CD14-positive monocyte (primary cell): ENCODE measurements at regions of chr16 and their contacts with region 1.

Region 1: DNA sequence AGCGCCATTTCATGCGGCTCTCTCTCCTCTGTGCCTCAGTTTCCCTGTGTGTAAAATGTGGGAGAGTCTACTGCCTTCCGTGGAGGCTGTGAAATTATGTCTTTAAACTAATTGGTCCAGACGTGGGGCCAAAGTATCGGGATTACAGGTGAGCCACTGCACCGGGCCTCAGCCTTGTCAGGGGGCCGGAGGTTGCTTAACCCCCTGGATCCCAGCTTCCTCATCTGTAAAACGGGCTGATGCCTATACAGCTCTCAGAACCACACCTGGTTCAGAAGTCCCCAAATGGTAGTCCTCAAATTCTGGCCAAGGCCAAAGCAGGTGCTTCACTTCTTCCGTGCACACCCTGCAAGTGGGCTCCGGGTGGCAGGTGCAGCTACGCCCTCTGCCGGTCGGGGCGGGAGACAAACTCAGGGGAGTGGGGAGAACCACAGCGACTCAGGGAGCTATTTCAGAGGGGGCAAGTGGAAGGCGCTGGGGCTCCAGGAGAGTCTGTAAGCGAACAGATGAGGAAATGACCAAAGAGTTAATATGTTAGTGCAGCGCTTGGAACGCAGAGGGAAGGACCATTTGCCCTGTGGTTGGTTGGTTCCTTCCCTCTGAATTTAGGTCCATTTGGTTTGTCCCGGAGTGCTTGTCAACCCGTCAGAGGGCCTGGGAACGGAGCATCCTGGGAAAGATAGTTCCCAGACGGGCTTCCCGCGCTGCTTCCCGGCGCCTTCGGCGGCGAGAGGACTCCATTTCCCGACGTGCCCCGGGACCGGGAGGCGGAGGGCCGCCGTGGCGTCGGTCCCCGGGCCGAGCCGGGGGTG is at the start of gene MGRN1:
- DNase-seq: peak; percentile 92 to 96 (median 96)
- H3K4me3 ChIP-seq: peak within 1 kb of the TSS; percentile 61 to 96 (median 87)
- H3K4me3 Mint-ChIP-seq: peak within 1 kb of the TSS; percentile 100
- H3K27ac ChIP-seq: peak within 1 kb of the TSS; percentile 94 to 98
- H3K27ac Mint-ChIP-seq: peak within 1 kb of the TSS; percentile 99 to 100 (median 100)
- H3K4me1 ChIP-seq: peaks cover 38 to 51% of the 10 kb centered on the region in 2 donors
- H3K4me1 Mint-ChIP-seq: peaks cover 50% of the 10 kb centered on the region
- H3K27me3 ChIP-seq: no peaks in the 10 kb centered on the region
- H3K27me3 Mint-ChIP-seq: no peaks in the 10 kb centered on the region
- CTCF ChIP-seq: peak; percentile 95
- polyA plus RNA-seq, gene MGRN1: 3.7 to 48.2 (median 4.7) TPM

Region 2: DNA sequence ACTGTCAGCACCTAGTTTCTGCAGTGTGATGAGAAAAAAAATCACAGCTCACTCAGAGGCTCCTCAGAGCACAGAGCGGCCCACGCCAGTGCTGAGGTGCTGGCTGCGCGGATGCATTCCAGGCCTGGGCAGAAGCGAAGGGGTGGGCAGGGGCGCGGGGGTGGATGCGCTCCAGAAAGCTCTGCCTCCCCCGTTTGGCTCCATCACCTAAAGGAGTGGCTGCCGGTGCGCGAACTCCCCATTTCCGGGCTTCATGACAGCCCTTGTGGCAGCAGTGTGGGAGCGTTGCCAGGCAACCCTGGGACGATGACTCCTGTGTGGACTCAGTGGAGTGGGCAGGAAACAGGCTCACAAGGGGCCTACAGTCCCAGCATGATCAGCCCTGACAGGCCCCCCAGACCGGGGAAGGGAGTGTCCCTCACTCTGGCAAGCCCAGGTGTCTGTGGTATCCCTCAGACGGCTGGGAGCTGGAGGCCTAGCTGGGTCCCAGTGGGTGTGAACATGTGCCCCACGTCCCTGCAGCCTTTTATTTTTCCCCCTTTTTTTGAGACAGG is 36.3 kb after region 1 on chr16:
- intact Hi-C with region 1: loop called (anchors 5 kb)
- DNase-seq: no peak
- H3K4me3 ChIP-seq: no peak overlapping the region
- H3K4me3 Mint-ChIP-seq: no peak overlapping the region
- H3K27ac ChIP-seq: no peak overlapping the region
- H3K27ac Mint-ChIP-seq: no peak overlapping the region
- H3K4me1 ChIP-seq: peaks cover 36 to 47% of the 10 kb centered on the region in 2 donors
- H3K4me1 Mint-ChIP-seq: peaks cover 49% of the 10 kb centered on the region
- H3K27me3 ChIP-seq: no peaks in the 10 kb centered on the region
- H3K27me3 Mint-ChIP-seq: peaks cover 0 to 2% (median 0%) of the 10 kb centered on the region in 3 donors
- CTCF ChIP-seq: no peak

Region 3: DNA sequence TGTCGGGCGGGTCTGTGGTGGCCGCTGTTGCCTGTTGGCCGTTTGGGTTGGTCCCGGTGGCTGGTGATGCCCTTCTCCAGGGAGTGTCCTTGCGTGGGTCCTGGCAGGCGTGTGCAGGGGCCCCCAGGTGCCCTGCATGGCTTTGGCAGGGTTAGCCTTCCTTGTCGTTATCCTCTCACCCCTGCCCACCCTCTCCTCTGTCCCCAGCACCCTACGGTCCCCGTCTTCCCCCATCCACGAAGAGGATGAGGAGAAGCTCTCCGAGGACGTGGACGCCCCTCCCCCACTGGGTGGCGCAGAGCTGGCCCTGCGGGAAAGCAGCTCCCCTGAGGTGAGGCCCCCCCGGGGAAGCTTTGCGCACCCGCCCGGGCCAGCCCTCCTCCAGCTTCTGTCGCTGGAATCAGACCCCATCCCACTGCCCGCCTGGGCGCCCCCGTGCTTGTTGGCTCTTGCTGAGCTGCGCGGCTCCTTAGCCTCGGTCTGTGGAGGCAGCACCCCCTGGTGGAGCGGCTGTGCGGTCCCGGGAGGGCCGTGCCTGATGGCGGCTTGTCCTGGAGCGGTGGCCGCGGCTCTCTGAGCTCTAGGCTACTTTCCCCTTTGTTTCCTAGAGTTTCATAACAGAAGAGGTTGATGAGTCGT is 58.5 kb after region 1 on chr16:
- intact Hi-C with region 1: loop called in 1 of 2 experiments (anchors 5 kb)
- DNase-seq: peak; percentile 53 to 66 (median 66)
- H3K4me3 ChIP-seq: peak overlapping the region in 2 of 3 experiments; percentile 26 to 54
- H3K4me3 Mint-ChIP-seq: peak overlapping the region; percentile 54 to 70
- H3K27ac ChIP-seq: peak overlapping the region; percentile 60 to 94
- H3K27ac Mint-ChIP-seq: peak overlapping the region; percentile 82 to 96 (median 90)
- H3K4me1 ChIP-seq: peaks cover 46 to 48% of the 10 kb centered on the region in 2 donors
- H3K4me1 Mint-ChIP-seq: peaks cover 42% of the 10 kb centered on the region
- H3K27me3 ChIP-seq: no peaks in the 10 kb centered on the region
- H3K27me3 Mint-ChIP-seq: no peaks in the 10 kb centered on the region
- CTCF ChIP-seq: peak; percentile 77

Region 4: DNA sequence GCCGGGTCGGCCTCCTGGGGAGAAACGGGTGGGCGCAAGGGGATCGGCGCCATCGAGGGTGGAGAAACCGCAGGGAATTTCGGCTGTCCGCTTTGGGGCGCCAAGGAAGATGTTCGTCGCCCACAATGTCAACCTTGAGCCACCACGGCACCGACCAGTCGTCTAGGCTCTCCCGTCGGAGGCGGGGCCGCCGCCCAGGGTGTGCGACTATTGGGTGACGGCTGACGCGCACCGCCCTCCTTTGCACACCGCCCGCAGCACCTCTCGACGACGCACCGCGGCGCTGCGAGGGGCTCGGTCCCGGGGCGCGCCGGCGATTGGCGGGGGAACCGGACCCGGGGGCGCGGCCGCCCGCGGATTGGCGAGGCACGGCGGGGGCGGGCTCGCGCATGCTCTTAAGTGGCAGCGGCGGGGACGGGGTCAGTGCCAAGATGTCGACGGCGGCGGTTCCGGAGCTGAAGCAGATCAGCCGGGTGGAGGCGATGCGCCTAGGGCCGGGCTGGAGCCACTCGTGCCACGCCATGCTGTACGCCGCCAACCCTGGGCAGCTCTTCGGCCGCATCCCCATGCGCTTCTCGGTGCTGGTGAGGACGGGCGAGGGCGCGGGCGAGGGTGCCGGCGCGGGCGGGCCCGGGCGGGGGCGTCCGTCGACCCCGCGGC is 69.2 kb after region 1 on chr16 and contains the start of gene NUDT16L1:
- intact Hi-C with region 1: loop called in 1 of 2 experiments (anchors 5 kb)
- DNase-seq: peak; percentile 92 to 94 (median 94)
- H3K4me3 ChIP-seq: peak within 1 kb of the TSS; percentile 67 to 97 (median 83)
- H3K4me3 Mint-ChIP-seq: peak within 1 kb of the TSS; percentile 80 to 86
- H3K27ac ChIP-seq: peak within 1 kb of the TSS; percentile 61 to 88
- H3K27ac Mint-ChIP-seq: peak within 1 kb of the TSS; percentile 78 to 91 (median 88)
- H3K4me1 ChIP-seq: peaks cover 50 to 63% of the 10 kb centered on the region in 2 donors
- H3K4me1 Mint-ChIP-seq: peaks cover 45% of the 10 kb centered on the region
- H3K27me3 ChIP-seq: no peaks in the 10 kb centered on the region
- H3K27me3 Mint-ChIP-seq: peaks cover 0 to 1% (median 0%) of the 10 kb centered on the region in 3 donors
- CTCF ChIP-seq: peak; percentile 27
- polyA plus RNA-seq, gene NUDT16L1: 40.0 to 62.7 (median 41.1) TPM